IMR-90 (cell line): ENCODE measurements at regions of chr7 and their contacts with region 1.

Region 1: GRCh38 chr7:117119192-117119924 is 166.1 kb downstream of the ST7 start:
- DNase-seq: peak; percentile 81
- ATAC-seq: peak; percentile 75
- H3K4me3 ChIP-seq: no peak overlapping the region
- H3K27ac ChIP-seq: no peak overlapping the region
- H3K4me1 ChIP-seq: peaks cover 3% of the 10 kb centered on the region
- H3K27me3 ChIP-seq: no peaks in the 10 kb centered on the region
- CTCF ChIP-seq: peak; percentile 93
- POLR2A ChIP-seq: 0 out of 2 replicates have a peak, but pooled peaks have one; percentile 37
- RAD21 ChIP-seq: peak; percentile 95

Region 2: DNA sequence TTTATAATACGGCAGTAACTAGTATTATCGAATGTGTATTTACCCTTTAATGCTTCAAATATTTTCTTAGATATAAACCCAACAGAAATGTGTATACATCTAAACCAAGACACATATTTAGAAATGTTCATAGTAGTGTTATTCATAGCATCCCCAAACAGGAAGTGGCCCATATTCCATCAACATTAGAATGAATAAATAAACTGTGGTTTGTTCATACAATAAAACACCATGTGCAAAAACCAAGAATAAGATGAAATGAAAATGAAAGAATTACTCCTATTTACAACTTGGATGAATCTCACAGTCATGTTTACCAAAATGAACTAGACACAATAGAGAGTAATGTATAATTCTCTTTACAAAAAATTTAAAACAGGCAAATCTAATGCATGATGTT is 629.0 kb before region 1 on chr7:
- CTCF ChIA-PET with region 1: no interaction called
- POLR2A ChIA-PET with region 1: interaction called, 12 read pairs
- dilution Hi-C with region 1: no loop called
- in situ Hi-C with region 1: no loop called
- intact Hi-C with region 1: no loop called
- DNase-seq: no peak
- ATAC-seq: peak; percentile 38; the same call in 1 of the 2 replicates
- H3K4me3 ChIP-seq: no peak overlapping the region
- H3K27ac ChIP-seq: no peak overlapping the region
- H3K4me1 ChIP-seq: peaks cover 8% of the 10 kb centered on the region; the same call in 1 of the 2 replicates
- H3K27me3 ChIP-seq: no peaks in the 10 kb centered on the region
- CTCF ChIP-seq: no peak
- POLR2A ChIP-seq: no peak
- RAD21 ChIP-seq: no peak

Region 3: GRCh38 chr7:117098457-117098856 is 20.9 kb before region 1 on chr7:
- CTCF ChIA-PET with region 1: no interaction called
- POLR2A ChIA-PET with region 1: no interaction called
- dilution Hi-C with region 1: no loop called
- in situ Hi-C with region 1: no loop called
- intact Hi-C with region 1: no loop called
- DNase-seq: peak; percentile 99
- ATAC-seq: peak; percentile 93
- H3K4me3 ChIP-seq: no peak overlapping the region
- H3K27ac ChIP-seq: no peak overlapping the region
- H3K4me1 ChIP-seq: peaks cover 5% of the 10 kb centered on the region
- H3K27me3 ChIP-seq: no peaks in the 10 kb centered on the region
- CTCF ChIP-seq: no peak
- POLR2A ChIP-seq: no peak
- RAD21 ChIP-seq: no peak; the same call in 1 of the 2 replicates

Region 4: GRCh38 chr7:117212969-117213877 is 93.9 kb after region 1 on chr7:
- CTCF ChIA-PET with region 1: no interaction called
- POLR2A ChIA-PET with region 1: no interaction called
- dilution Hi-C with region 1: no loop called
- in situ Hi-C with region 1: no loop called
- intact Hi-C with region 1: no loop called
- DNase-seq: peak; percentile 75
- ATAC-seq: peak; percentile 84
- H3K4me3 ChIP-seq: no peak overlapping the region
- H3K27ac ChIP-seq: peak overlapping the region; percentile 60; the same call in 1 of the 2 replicates
- H3K4me1 ChIP-seq: peaks cover 5% of the 10 kb centered on the region
- H3K27me3 ChIP-seq: no peaks in the 10 kb centered on the region
- CTCF ChIP-seq: peak; percentile 91
- POLR2A ChIP-seq: no peak
- RAD21 ChIP-seq: peak; percentile 88